Heart left ventricle (tissue), 16 donors: ENCODE measurements at regions of chr2 and their contacts with region 1.

Region 1: GRCh38 chr2:18749912-18750526 is 160.7 kb upstream of the NT5C1B start:
- DNase-seq: peak in 4 of 5 donors; percentile 36 to 61 (median 46)
- ATAC-seq: peak in 1 of 4 donors; percentile 47
- H3K4me3 ChIP-seq: no peak overlapping the region
- H3K27ac ChIP-seq: no peak overlapping the region
- H3K4me1 ChIP-seq: peaks cover 0 to 6% (median 0%) of the 10 kb centered on the region in 12 donors
- H3K27me3 ChIP-seq: no peaks in the 10 kb centered on the region
- CTCF ChIP-seq: peak; percentile 63 to 89 (median 76)
- POLR2A ChIP-seq: no peak

Region 2: GRCh38 chr2:18435421-18436037 is 314.5 kb before region 1 on chr2:
- intact Hi-C with region 1: loop called in 3 of 10 experiments (anchors 10 kb)
- DNase-seq: no peak
- ATAC-seq: peak in 2 of 4 donors; percentile 37 to 38
- H3K4me3 ChIP-seq: no peak overlapping the region
- H3K27ac ChIP-seq: no peak overlapping the region
- H3K4me1 ChIP-seq: peaks cover 0 to 16% (median 0%) of the 10 kb centered on the region in 12 donors
- H3K27me3 ChIP-seq: no peaks in the 10 kb centered on the region
- CTCF ChIP-seq: peak in 11 of 12 donors; percentile 38 to 71 (median 57)
- POLR2A ChIP-seq: no peak

Region 3: GRCh38 chr2:18976168-18976961 is 226.3 kb after region 1 on chr2:
- intact Hi-C with region 1: loop called in 2 of 10 experiments (anchors 5 to 10 kb)
- DNase-seq: peak in 1 of 5 donors; percentile 11
- ATAC-seq: peak; percentile 38 to 79 (median 64)
- H3K4me3 ChIP-seq: peak overlapping the region in 8 of 12 donors; percentile 6 to 36 (median 21)
- H3K27ac ChIP-seq: peak overlapping the region; percentile 19 to 76 (median 58)
- H3K4me1 ChIP-seq: peaks cover 0 to 30% (median 15%) of the 10 kb centered on the region in 12 donors
- H3K27me3 ChIP-seq: no peaks in the 10 kb centered on the region
- CTCF ChIP-seq: no peak
- POLR2A ChIP-seq: no peak

Region 4: GRCh38 chr2:19682493-19682892 is 932.5 kb after region 1 on chr2:
- intact Hi-C with region 1: loop called in 1 of 10 experiments (anchors 10 kb)
- DNase-seq: no peak
- ATAC-seq: no peak
- H3K4me3 ChIP-seq: no peak overlapping the region
- H3K27ac ChIP-seq: no peak overlapping the region
- H3K4me1 ChIP-seq: peaks cover 0 to 4% (median 0%) of the 10 kb centered on the region in 12 donors
- H3K27me3 ChIP-seq: no peaks in the 10 kb centered on the region
- CTCF ChIP-seq: no peak
- POLR2A ChIP-seq: no peak